H1 (cell line): ENCODE measurements at regions of chr15 and their contacts with region 1.

Region 1: GRCh38 chr15:78671626-78672211 is 30.7 kb upstream of the CHRNB4 start:
- DNase-seq: peak; percentile 49 to 60
- H3K4me3 ChIP-seq: no peak overlapping the region
- H3K27ac ChIP-seq: no peak overlapping the region
- H3K4me1 ChIP-seq: peaks cover 7 to 24% (median 16%) of the 10 kb centered on the region in 4 experiments
- H3K27me3 ChIP-seq: peaks cover 0 to 6% (median 4%) of the 10 kb centered on the region in 4 experiments; a peak in 3 of 7 replicates
- CTCF ChIP-seq: no peak
- EP300 ChIP-seq: no peak
- POLR2A ChIP-seq: no peak
- RAD21 ChIP-seq: no peak

Region 2: DNA sequence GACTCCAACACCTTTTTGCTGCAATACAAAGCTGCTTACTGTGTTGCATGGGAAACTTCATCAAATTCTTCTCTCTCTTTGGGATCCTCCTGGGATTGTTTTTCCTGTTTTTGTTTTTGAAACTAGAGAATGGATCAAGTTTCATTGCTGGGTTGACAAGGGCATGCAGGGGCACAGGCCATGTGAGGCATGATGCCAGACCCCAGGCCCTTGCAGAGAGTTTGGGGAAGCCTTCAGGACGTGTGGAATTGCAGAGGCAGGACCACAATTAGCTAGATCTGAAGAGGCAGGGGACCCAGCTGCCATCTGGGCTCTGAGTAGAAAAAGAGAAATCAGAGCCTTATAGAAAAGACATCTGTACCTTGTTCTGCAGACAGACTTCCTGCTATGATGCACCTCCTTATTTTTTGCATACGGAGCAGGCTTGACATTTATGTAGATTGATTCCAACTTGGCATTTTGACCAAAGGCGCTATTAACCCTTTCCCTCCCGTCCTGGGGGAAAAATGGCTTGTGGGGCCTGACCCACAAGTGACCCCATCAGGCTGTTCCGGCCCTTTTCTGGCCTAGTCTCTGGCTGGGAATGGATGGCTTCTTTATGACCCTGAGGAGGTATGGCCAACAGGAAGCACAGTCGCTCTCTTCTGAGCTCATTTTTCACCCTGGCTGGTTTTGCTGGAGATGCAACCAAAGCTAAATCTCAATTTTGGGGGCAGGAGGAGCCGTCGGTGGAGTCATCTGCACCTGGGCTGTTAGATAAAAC is 13.6 kb after region 1 on chr15:
- CTCF ChIA-PET with region 1: interaction called, 10 read pairs
- POLR2A ChIA-PET with region 1: no interaction called
- DNase-seq: peak in 1 of 2 experiments; percentile 50
- H3K4me3 ChIP-seq: no peak overlapping the region
- H3K27ac ChIP-seq: no peak overlapping the region
- H3K4me1 ChIP-seq: peaks cover 9 to 18% (median 16%) of the 10 kb centered on the region in 4 experiments
- H3K27me3 ChIP-seq: no peaks in the 10 kb centered on the region
- CTCF ChIP-seq: no peak
- EP300 ChIP-seq: no peak
- POLR2A ChIP-seq: no peak
- RAD21 ChIP-seq: no peak

Region 3: DNA sequence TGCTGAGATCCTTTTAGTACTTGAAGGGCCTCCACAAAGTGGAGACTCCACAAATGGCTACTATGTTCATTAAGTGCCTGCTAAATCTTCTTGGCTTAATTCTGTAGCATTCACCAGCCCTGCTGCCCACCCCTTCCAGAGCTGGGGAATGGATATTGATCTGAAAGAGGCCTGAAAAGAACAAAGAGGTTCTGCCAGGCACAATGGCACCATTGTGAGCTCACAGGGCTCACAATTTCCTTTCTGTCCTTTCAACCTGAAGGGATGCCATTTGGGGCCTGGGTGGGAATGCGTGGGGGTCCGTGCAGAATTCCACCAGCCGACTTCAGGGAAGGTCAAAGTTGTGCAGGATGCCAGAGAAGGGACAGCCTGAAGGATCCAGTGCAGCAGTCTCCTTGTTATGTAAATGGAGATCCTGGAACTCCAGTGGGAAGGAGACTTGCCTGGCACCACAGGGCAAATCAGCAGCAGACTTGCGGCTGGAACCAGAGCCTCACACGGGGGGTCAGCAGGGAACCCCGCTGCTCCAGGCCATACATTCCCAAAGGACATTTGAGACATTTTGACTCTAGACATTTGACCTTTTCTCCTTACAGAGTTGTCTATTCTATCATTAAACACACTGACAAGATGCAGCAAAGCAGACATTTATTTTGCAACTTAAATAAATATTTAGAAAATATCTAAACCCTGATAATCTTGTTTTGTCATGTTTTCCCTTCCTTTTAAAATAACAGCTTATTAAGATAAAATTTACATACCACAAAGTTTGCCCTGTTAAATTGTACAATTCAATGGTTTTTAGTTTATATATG is 179.4 kb after region 1 on chr15:
- CTCF ChIA-PET with region 1: no interaction called
- POLR2A ChIA-PET with region 1: no interaction called
- DNase-seq: no peak
- H3K4me3 ChIP-seq: no peak overlapping the region
- H3K27ac ChIP-seq: no peak overlapping the region
- H3K4me1 ChIP-seq: peaks cover 3 to 8% (median 5%) of the 10 kb centered on the region in 4 experiments
- H3K27me3 ChIP-seq: no peaks in the 10 kb centered on the region
- CTCF ChIP-seq: no peak
- EP300 ChIP-seq: no peak
- POLR2A ChIP-seq: no peak
- RAD21 ChIP-seq: no peak